WTC11 (cell line): ENCODE measurements at regions of chr4 and their contacts with region 1.

Region 1: DNA sequence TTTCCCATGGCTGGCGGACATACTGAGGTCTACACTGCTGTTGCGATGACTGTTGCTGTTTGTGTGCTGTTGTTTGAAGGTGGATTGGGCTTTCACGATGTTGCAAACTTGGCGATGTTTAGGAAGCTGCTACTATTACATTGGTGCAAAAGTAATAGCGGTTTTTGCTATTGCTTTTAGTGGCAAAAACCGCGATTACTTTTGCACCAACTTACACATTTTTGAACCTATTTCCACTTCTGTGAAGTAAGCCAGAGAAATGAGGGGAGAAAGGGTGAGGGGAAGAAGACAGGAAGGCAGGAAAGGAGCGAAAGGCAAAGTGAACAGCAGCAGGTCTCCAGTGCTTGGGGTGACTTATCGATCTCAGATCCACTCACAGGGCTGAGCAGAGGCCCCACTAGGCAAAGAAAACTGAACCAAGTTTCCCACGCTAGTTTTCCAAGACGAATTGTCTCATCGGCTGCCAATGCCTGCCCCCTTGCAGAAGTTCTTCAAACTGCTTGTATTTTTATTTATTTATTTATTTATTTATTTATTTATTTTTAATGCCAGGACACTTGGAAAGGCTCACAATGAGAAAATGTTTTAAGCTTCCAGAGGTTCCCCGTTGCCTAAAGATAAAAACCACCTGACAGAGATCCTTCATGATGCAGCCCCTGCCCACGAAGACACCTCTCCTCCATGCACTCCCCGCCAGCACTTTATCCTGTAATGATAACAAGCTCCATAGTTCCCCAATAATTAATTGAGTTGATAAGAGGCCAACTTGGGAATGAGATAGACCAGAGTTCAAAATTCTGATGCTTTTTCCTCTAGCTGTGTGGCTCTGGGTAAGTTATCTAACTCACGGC is 43.3 kb downstream of the QDPR start:
- DNase-seq: peak; percentile 21
- ATAC-seq: no peak
- H3K4me3 Mint-ChIP-seq: no peak overlapping the region
- H3K27ac Mint-ChIP-seq: no peak overlapping the region
- H3K4me1 Mint-ChIP-seq: peaks cover 4% of the 10 kb centered on the region
- H3K27me3 Mint-ChIP-seq: no peaks in the 10 kb centered on the region
- CTCF ChIP-seq: peak; percentile 84

Region 2: DNA sequence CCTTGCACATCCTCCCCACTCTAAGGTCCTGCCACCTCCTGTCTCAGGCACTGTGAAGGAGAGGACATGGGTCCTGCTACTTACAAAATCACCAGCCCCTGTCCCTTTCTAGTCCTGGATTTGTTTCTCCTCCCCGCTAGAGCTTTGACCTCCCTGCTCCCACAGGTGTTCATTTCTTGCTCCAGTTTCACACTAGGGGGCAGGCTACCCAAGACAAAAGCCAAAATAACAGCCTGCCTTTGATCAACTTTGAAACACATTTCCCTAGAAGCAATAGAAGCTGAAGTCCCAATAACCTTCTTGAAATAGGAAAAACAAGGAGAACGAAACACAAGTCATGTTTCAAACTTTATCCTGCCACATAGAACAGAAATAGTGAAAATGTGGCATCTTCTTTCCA is 121.2 kb before region 1 on chr4:
- CTCF ChIA-PET with region 1: interaction called, 23 read pairs
- POLR2A ChIA-PET with region 1: no interaction called
- DNase-seq: peak; percentile 57
- ATAC-seq: peak; percentile 72
- H3K4me3 Mint-ChIP-seq: no peak overlapping the region
- H3K27ac Mint-ChIP-seq: no peak overlapping the region
- H3K4me1 Mint-ChIP-seq: peaks cover 20% of the 10 kb centered on the region
- H3K27me3 Mint-ChIP-seq: no peaks in the 10 kb centered on the region
- CTCF ChIP-seq: peak; percentile 42